ENCODE measurements at regions of chr2 and their contacts with region 1.

Region 1: GRCh38 chr2:71306762-71307161 is 24.8 kb upstream of the ZNF638 start:
- DNase-seq: no peak
- ATAC-seq: no peak
- H3K4me3 ChIP-seq: no peak overlapping the region
- H3K27ac ChIP-seq: no peak overlapping the region
- H3K4me1 ChIP-seq: no peaks in the 10 kb centered on the region
- H3K27me3 ChIP-seq: no peaks in the 10 kb centered on the region
- CTCF ChIP-seq: no peak
- POLR2A ChIP-seq: no peak

Region 2: DNA sequence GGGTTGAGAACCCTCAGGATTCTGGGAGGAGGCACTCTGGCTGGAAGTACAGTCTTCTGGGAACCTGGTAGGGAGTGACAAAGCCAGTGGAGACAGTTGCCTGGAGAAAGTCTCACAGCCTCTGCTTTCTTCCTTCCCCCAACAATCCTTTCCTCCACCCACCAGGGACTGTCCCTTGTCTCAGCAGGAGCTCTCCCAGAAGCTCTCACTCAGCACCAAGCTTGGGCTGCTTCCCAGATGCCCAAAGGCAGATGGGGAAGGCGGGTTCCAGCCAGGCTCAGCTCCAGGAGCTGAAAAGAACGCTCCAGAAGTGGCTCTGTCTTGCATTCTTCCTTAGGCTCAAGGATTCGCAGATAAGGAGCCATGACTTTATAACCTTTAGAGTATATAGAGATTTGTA is 245.9 kb before region 1 on chr2:
- intact Hi-C with region 1: no loop called
- DNase-seq: no peak
- ATAC-seq: no peak
- H3K4me3 ChIP-seq: no peak overlapping the region
- H3K27ac ChIP-seq: no peak overlapping the region
- H3K4me1 ChIP-seq: no peaks in the 10 kb centered on the region
- H3K27me3 ChIP-seq: no peaks in the 10 kb centered on the region
- CTCF ChIP-seq: no peak
- POLR2A ChIP-seq: no peak

Region 3: GRCh38 chr2:71226965-71227560 is 79.7 kb before region 1 on chr2 and contains the start of gene PAIP2B:
- intact Hi-C with region 1: no loop called
- DNase-seq: peak; percentile 98 to 99 (median 99)
- ATAC-seq: peak; percentile 92 to 96 (median 93)
- H3K4me3 ChIP-seq: peak within 1 kb of the TSS; percentile 78 to 89 (median 81)
- H3K27ac ChIP-seq: peak within 1 kb of the TSS; percentile 79 to 93 (median 89)
- H3K4me1 ChIP-seq: peaks cover 0 to 7% (median 4%) of the 10 kb centered on the region in 4 donors
- H3K27me3 ChIP-seq: no peaks in the 10 kb centered on the region
- CTCF ChIP-seq: peak in 1 of 4 donors; percentile 1
- POLR2A ChIP-seq: peak; percentile 79
- total RNA-seq, gene PAIP2B: 8.4 to 30.1 (median 15.3) TPM

Region 4: GRCh38 chr2:71358931-71359671 is 52.3 kb after region 1 on chr2:
- intact Hi-C with region 1: no loop called
- DNase-seq: no peak
- ATAC-seq: no peak
- H3K4me3 ChIP-seq: no peak overlapping the region
- H3K27ac ChIP-seq: no peak overlapping the region
- H3K4me1 ChIP-seq: peaks cover 0 to 12% (median 3%) of the 10 kb centered on the region in 4 donors
- H3K27me3 ChIP-seq: no peaks in the 10 kb centered on the region
- CTCF ChIP-seq: no peak
- POLR2A ChIP-seq: no peak

Region 5: DNA sequence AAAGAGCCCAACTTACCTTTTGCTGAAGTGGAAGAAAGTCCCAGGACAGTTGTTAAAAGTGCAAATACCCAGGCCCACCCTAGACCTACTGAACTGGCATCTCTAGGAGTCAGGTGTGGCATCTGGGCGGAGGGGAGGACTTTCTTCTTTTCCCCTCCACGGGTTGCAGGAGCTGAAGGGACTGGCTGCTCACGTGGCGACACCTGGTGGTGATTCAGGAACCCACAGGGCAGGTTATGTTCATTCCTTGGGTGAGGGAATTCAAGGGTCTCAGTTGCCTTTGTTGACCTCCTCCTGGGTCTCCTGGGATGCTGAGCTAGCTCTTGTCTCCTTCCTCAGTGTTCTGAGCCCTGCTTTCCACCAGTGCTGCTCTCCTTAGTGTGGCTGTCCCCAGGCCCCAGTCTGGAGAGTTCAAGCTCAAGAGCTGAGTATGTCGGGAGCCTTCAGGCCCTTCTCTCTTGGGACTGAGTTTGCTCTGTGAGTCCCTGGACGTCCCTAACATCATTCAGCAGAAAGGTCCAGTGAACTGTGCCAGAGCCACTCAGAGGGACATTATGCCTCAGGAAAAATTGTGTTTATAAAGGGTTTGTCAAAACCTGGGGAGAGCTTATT is 203.5 kb after region 1 on chr2:
- intact Hi-C with region 1: loop called in 1 of 2 experiments (anchors 10 kb)
- DNase-seq: peak; percentile 67 to 73 (median 72)
- ATAC-seq: peak; percentile 73 to 88 (median 85)
- H3K4me3 ChIP-seq: no peak overlapping the region
- H3K27ac ChIP-seq: no peak overlapping the region
- H3K4me1 ChIP-seq: no peaks in the 10 kb centered on the region
- H3K27me3 ChIP-seq: no peaks in the 10 kb centered on the region
- CTCF ChIP-seq: peak; percentile 87 to 93 (median 90)
- POLR2A ChIP-seq: no peak

Measured in right lobe of liver (tissue), 6 donors.